Head of caudate nucleus (tissue), 42 donors: ENCODE measurements at regions of chr19 and their contacts with region 1.

Region 1: GRCh38 chr19:18675779-18676178 is 7.7 kb upstream of the CRTC1 start:
- DNase-seq: no peak

Region 2: GRCh38 chr19:18607226-18608101 is 68.3 kb before region 1 on chr19:
- intact Hi-C with region 1: loop called (anchors 5 kb)
- DNase-seq: peak in 10 of 42 donors; percentile 23 to 72 (median 52)

Region 3: GRCh38 chr19:18831524-18832305 is 155.9 kb after region 1 on chr19 and contains the start of gene UPF1:
- intact Hi-C with region 1: loop called (anchors 10 kb)
- DNase-seq: peak; percentile 80 to 97 (median 94)